Activated CD8-positive, alpha-beta T cell treated with anti-CD3 and anti-CD28 coated beads, Interleukin-2, amount 10 ng/mL, durations not matched to agents 7 days and 5 days (primary cell): ENCODE measurements at regions of chr1 and their contacts with region 1.

Region 1: DNA sequence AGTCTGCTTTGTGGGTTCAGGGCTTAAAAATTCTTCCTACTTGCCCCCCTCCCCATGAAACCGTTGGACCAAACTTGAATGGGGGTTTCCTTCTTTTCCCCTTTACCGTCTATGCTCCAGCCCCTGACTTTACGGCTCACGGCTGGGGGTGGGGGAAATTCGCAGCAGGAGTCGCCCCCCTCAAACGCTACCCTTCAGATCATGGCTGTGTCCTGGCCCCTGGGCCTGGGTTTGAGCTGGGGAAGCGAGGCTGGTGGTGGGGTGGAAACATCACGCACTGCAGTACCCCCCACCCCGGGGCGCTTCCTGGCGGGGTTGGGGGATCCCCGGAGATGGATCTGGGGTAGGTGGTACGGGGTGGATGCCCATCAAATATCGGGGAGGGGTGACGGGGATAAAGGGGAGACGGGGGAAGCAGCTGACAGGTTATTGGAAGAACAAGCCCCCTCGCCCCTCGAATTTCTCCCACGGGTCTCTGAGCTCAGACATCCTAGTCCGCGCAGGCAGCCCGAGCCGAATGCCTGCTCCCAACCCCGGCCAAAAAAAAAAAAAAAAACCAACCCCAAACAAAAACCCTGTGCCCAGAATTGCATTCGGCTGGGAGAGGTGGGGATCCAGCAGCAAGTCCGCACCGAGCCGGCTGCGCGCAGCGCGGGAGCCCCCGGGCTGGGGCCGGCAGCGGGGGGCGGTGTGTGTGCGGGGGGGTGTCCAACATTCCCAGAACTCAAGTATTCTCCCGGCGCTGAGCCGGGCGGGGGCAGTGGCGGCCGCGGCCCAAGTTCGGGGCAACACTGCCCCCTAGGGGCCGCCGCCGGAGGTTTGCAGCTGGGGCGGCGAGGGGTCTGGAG is 59.0 kb upstream of the ACOT11 start:
- DNase-seq: peak; percentile 74
- ATAC-seq: peak; percentile 79
- H3K4me3 Mint-ChIP-seq: peak overlapping the region; percentile 83
- H3K27ac Mint-ChIP-seq: peak overlapping the region; percentile 68
- H3K4me1 Mint-ChIP-seq: peaks cover 48% of the 10 kb centered on the region
- H3K27me3 Mint-ChIP-seq: peaks cover 26% of the 10 kb centered on the region

Region 2: DNA sequence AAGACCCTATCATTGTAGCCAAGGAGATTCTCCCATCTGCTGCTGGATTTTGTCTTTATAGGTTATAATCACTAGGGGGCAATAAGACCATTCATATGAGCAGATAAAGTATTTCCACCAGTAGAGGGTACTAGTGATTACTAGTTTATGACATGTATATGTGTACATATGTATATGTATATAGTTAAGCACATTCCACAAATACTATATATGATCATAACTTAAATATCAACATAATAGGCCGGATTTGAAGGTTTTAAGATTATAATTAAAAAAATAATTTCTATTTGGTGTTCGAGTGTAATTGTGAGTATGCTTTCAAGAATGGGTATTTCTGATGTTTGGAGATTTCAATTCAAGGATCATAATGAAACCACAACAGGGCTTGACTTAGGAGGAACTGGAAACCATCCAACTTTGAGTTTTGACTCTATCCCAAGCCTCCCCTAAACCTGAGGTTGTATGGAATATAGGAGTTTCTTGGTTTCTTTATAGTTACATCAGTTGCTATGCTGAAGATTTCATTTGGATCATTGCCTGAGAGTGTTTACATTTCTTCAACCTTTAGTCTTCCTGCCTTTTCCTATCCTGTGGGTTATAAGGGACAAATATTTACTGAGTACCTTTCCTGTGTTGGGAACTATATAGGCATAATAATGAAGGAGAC is 418.7 kb before region 1 on chr1:
- CTCF ChIA-PET with region 1: interaction called, 10 read pairs
- POLR2A ChIA-PET with region 1: interaction called, 3 read pairs
- DNase-seq: no peak
- ATAC-seq: peak; percentile 81
- H3K4me3 Mint-ChIP-seq: no peak overlapping the region
- H3K27ac Mint-ChIP-seq: no peak overlapping the region
- H3K4me1 Mint-ChIP-seq: no peaks in the 10 kb centered on the region
- H3K27me3 Mint-ChIP-seq: no peaks in the 10 kb centered on the region

Region 3: DNA sequence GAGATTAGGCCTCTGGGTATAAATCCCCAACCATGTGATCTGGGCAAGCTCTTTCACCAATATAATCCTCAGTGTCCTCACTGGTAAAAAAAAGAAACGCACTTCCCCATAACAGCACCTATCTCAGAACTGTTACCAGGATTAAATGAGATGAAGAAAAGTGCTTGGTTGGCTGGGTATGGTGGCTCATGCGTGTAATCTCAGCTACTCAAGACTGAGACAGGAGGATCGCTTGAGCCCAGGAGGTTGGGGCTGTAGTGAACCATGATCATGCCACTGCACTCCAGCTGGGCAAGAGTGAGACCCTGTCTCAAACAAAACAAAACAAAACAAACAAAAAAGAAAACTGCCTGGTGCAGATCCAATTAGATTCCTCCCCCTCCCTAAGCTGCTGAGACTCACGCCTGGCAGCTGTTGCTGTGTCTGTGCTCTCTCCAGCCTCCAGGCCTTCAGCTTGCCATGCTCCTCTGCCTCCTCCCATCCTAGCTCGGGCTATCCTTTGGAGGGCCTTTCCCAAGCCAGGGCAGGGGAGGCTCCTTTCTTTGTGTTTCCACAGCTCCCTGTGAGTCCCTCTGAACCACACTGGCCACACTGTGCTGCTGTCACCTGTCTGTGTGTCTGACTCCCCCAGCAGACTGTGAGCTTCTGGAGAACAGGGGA is 308.2 kb before region 1 on chr1:
- CTCF ChIA-PET with region 1: interaction called, 15 read pairs
- POLR2A ChIA-PET with region 1: no interaction called
- DNase-seq: no peak
- ATAC-seq: no peak
- H3K4me3 Mint-ChIP-seq: no peak overlapping the region
- H3K27ac Mint-ChIP-seq: no peak overlapping the region
- H3K4me1 Mint-ChIP-seq: no peaks in the 10 kb centered on the region
- H3K27me3 Mint-ChIP-seq: no peaks in the 10 kb centered on the region

Region 4: GRCh38 chr1:54406339-54407153 is 82.5 kb before region 1 on chr1 and contains the start of gene SSBP3:
- CTCF ChIA-PET with region 1: interaction called, 29 read pairs
- POLR2A ChIA-PET with region 1: interaction called, 34 read pairs
- DNase-seq: peak; percentile 93
- ATAC-seq: peak; percentile 94
- H3K4me3 Mint-ChIP-seq: peak within 1 kb of the TSS; percentile 92
- H3K27ac Mint-ChIP-seq: peak within 1 kb of the TSS; percentile 87
- H3K4me1 Mint-ChIP-seq: peaks cover 66% of the 10 kb centered on the region
- H3K27me3 Mint-ChIP-seq: no peaks in the 10 kb centered on the region
- total RNA-seq, gene SSBP3: 109 to 111 TPM

Region 5: DNA sequence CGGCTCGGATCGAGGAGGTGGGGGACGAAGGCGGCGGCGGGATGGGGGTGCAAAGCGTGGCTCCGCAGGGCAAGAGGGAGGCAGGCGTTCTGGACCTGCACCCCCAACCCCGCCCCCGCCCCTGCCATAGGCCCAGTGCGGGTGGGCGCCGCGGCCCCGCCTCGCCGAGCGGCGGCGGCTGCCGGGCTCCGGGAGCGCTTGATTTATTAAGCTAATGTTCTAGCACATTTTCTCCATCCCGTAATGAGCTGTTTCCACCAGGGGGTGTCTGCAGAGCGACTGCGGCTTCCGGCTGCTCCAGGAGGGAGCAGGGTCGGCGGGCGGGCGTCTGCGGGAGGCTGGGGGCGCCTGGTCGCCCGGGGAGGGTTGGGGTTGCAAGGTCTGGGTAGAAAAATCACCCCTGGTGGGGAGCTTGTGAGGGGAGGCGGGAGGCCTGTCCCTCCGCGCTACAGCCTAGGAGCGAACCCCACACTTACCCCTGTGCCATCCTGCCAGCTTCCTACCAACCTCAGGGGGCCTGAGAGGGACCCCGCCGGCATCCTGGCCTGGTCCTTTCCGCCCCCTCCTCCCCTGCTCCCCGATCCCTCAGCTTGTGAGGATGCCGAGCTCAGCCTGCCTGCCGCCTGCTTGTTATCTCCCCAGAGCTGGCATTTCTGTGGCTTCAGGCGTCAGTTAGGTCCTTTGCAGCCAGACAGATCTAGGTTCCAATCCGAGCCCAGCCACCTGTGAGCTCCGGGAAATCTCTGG is 10.5 kb after region 1 on chr1:
- CTCF ChIA-PET with region 1: interaction called, 10 read pairs
- POLR2A ChIA-PET with region 1: no interaction called
- DNase-seq: peak; percentile 65
- ATAC-seq: peak; percentile 82
- H3K4me3 Mint-ChIP-seq: peak overlapping the region; percentile 64
- H3K27ac Mint-ChIP-seq: no peak overlapping the region
- H3K4me1 Mint-ChIP-seq: peaks cover 19% of the 10 kb centered on the region
- H3K27me3 Mint-ChIP-seq: peaks cover 40% of the 10 kb centered on the region

Region 6: DNA sequence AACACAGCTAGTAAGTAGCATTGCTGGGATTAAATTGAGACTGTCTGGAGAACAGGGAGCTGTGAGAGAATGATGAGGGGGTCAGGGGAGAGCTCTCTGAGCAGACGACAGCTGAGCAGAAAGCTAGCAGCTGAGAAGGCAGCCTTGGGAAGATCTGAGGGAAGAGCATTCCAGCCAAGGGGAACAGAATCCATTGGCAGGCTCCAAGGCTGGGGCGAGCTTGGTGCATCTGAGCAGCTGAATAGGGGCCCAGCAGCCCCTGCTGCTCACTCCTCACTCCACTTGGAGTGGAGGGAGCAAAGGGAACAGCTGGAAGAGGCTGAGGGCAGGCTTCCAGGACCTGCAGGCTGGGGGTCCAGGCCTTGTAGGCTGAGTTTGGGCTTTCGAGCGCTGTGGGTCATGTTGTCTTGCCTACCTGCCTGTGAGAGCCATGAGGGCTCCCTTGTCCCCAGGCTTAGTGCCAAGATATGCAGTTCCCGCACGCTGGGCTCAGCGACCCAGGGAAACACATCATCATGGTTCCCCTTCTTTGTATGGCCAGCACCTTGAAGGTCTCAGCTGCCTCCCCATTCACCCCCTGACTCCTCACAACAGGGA is 69.5 kb after region 1 on chr1:
- CTCF ChIA-PET with region 1: no interaction called
- POLR2A ChIA-PET with region 1: no interaction called
- DNase-seq: no peak
- ATAC-seq: no peak
- H3K4me3 Mint-ChIP-seq: no peak overlapping the region
- H3K27ac Mint-ChIP-seq: no peak overlapping the region
- H3K4me1 Mint-ChIP-seq: no peaks in the 10 kb centered on the region
- H3K27me3 Mint-ChIP-seq: peaks cover 8% of the 10 kb centered on the region

Region 7: GRCh38 chr1:54600947-54601725 is 112.1 kb after region 1 on chr1:
- CTCF ChIA-PET with region 1: no interaction called
- POLR2A ChIA-PET with region 1: no interaction called
- DNase-seq: no peak
- ATAC-seq: no peak
- H3K4me3 Mint-ChIP-seq: no peak overlapping the region
- H3K27ac Mint-ChIP-seq: no peak overlapping the region
- H3K4me1 Mint-ChIP-seq: peaks cover 14% of the 10 kb centered on the region
- H3K27me3 Mint-ChIP-seq: no peaks in the 10 kb centered on the region